ENCODE measurements at regions of chr12 and their contacts with region 1.

Region 1: GRCh38 chr12:110449799-110450497 is at the start of gene ARPC3:
- DNase-seq: peak; percentile 93 to 96 (median 95)
- H3K4me3 ChIP-seq: peak within 1 kb of the TSS; percentile 90
- H3K27ac ChIP-seq: peak within 1 kb of the TSS in 1 of 2 donors; percentile 66
- H3K4me1 ChIP-seq: peaks cover 4% of the 10 kb centered on the region
- H3K27me3 ChIP-seq: no peaks in the 10 kb centered on the region
- CTCF ChIP-seq: peak; percentile 82 to 94 (median 89)
- EP300 ChIP-seq: no peak
- POLR2A ChIP-seq: peak; percentile 46
- total RNA-seq, gene ARPC3: 75.9 to 170 (median 92.9) TPM

Region 2: DNA sequence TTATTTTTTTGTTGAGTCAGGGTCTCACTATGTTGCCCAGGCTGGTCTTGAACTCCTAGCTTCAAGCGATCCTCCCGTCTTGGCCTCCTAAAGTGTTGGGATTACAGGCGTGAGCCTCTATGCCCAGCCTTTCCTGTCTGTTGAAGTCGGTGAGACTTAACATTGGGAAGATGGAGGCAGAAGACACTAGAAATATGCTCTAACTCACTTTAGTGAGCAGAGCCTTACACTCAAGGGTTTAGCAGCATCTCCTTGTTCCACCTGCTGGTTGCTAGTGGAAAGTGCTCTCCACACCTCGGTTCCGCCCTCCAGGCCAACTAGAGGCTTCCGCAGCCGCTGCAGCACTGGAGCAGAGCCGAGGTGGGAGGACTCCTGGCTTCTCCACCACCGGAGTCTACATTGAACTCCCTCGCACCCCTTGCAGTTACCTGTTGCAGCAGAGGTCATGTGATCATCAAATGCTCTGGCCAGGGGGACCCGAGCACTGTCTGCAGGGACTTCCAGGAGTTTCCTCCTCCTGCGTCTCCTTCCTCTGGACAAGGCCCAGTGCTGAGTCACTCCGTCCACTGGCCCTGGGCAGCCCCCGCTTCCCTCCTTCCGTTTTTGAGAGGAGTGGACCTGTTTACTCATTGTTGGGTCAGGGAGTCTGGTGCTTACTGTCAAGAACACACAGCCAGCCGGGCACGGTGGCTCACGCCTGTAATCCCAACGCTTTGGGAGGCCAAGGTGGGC is 248.4 kb after region 1 on chr12:
- intact Hi-C with region 1: loop called in 1 of 4 experiments (anchors 10 kb)
- DNase-seq: peak; percentile 75 to 84 (median 79)
- H3K4me3 ChIP-seq: peak overlapping the region; percentile 19
- H3K27ac ChIP-seq: no peak overlapping the region
- H3K4me1 ChIP-seq: peaks cover 5% of the 10 kb centered on the region
- H3K27me3 ChIP-seq: no peaks in the 10 kb centered on the region
- CTCF ChIP-seq: peak; percentile 28 to 72 (median 61)
- EP300 ChIP-seq: no peak
- POLR2A ChIP-seq: no peak

Region 3: DNA sequence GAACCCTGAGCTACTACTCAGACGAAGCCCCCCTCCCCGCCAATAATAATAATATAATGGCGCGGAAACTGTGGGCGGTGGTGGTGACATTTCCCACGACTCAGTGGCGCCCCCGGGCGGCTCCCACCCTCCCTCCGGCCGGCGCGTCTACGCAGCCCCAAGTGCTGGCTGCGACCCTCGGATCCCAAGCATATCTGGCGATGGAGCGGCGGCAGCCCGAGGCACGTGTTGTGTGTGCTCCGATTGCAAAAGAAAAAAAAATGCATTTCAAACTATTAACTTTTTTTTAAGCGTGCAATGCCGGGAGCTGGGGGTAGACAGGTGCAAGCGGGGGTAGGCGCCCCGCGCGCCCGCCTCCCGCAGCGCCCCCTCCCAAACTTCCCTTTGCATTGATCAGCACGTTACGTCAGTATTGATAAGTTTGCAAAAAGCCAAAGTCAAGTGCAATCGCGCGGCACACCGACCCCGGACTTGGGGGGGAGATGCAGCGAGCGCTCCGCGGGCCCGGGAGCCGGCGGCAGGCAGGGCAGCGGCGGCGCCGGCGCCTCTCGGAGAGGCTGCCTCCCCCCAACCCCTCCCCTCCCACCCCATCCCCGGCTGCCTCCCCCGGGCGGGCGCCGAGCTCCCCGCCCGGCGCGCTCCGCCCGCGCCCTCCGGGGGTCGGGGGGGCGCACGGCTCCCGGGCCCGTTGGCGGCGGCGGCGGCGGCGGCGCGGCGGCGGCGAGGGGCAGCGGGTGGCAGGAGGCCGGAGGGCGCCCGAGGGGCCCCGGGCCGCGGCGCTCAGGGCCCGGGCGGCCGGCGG is 583.5 kb after region 1 on chr12:
- intact Hi-C with region 1: no loop called
- DNase-seq: no peak
- H3K4me3 ChIP-seq: no peak overlapping the region
- H3K27ac ChIP-seq: no peak overlapping the region
- H3K4me1 ChIP-seq: no peaks in the 10 kb centered on the region
- H3K27me3 ChIP-seq: no peaks in the 10 kb centered on the region
- CTCF ChIP-seq: no peak
- EP300 ChIP-seq: no peak
- POLR2A ChIP-seq: no peak